ENCODE measurements at regions of chr22 and their contacts with region 1.

Region 1: GRCh38 chr22:31223786-31224191 is 11.7 kb downstream of the LIMK2 start:
- DNase-seq: no peak
- CTCF ChIP-seq: no peak

Region 2: DNA sequence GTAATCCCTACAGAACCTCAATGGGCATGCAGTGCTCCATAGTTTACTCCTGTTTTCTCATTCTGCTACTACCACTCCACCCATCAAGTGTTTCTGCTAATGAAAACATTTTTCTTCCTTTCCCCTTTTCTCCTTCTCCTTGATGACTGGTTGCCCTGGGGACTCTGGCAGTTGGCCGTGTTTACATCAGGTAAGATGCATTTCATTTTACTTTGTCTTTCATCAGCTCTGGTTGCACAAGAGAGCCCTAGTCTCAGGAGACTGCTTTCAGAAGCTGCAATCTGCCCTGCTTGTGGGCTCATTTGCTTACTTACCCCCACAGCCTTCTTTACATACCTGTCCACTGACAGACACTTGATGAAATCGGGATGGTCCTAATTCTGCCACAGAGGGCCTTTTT is 31.3 kb before region 1 on chr22:
- CTCF ChIA-PET with region 1: no interaction called
- POLR2A ChIA-PET with region 1: no interaction called
- DNase-seq: no peak
- CTCF ChIP-seq: no peak

Region 3: DNA sequence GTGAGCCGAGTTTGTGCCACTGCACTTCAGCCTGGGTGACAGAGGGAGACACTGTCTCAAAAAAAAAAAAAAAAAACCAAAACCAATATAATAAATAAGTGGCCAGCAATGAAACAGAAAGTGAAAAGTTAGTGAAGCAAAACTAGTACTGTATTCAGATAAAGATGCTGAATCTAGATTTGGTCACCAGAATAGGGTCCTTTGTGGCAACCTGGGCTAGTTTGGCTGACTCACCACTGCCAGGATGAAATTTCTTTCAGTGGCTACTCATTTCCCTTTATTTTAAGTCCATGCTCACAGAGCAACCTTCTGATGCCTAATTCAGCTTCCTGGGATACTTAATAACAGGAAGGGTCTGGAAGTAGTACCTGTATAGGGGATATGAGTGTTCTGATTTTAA is 14.3 kb after region 1 on chr22:
- CTCF ChIA-PET with region 1: interaction called, 72 read pairs
- POLR2A ChIA-PET with region 1: no interaction called
- DNase-seq: peak; percentile 42
- CTCF ChIP-seq: no peak

Measured in GM10248 (cell line).